Aorta (tissue), 5 donors: ENCODE measurements at regions of chr4 and their contacts with region 1.

Region 1: GRCh38 chr4:76305971-76306881 is at the start of gene STBD1:
- DNase-seq: peak; percentile 91 to 96
- ATAC-seq: peak; percentile 94
- H3K4me3 ChIP-seq: peak within 1 kb of the TSS; percentile 67 to 75
- H3K27ac ChIP-seq: peak within 1 kb of the TSS; percentile 45 to 90
- H3K4me1 ChIP-seq: peaks cover 3 to 5% of the 10 kb centered on the region in 2 donors
- H3K27me3 ChIP-seq: no peaks in the 10 kb centered on the region
- total RNA-seq, gene STBD1: 11.6 to 16.8 TPM

Region 2: DNA sequence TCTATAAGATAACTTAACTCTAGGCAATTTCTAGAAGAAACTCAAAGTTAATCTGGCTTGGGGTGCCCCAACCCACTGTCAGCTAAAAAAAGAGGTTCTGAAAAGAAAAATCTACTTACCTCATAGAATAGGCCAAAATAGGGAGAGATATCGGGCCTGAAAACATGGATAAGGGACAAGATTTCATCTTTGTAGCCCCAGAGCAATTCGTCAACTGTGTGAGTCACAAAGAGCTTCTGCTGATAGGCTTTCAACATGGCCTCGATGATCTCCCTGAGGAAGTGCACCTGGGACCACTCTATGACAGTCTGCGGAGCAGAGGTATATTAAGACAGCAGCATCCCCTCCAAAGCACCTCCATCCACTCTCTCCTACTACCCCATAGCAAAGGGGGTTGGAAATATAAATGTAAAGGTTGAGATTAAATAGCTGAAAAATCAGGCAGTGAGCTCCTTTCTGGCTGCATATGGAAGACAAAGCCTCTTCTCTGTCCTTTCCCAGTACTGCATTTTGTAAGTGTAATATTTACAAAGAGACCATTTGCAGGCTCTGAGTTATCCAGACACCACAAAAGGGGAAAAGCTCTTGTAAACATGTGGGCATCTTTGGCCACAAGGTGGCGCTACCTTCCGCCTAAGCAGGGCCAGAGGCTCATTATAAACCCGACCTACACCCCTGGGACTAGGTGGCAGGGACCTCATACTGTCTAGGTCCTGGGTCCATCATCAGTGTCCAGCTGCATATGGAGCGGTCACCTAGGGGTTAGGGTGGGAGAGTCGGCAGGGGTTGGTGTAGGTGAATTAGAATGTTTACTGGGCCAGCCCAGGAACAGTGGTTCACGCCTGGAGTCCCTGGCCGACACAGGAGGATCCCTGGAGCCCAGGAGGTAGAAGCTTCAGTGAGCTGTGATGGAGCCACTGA is 126.6 kb before region 1 on chr4:
- intact Hi-C with region 1: loop called (anchors 5 to 10 kb)
- DNase-seq: peak; percentile 90 to 95
- ATAC-seq: peak; percentile 89
- H3K4me3 ChIP-seq: no peak overlapping the region
- H3K27ac ChIP-seq: no peak overlapping the region
- H3K4me1 ChIP-seq: no peaks in the 10 kb centered on the region
- H3K27me3 ChIP-seq: no peaks in the 10 kb centered on the region

Region 3: GRCh38 chr4:76213415-76214176 is 92.6 kb before region 1 on chr4 and contains the start of gene SCARB2:
- intact Hi-C with region 1: loop called in 1 of 2 experiments (anchors 2 kb)
- DNase-seq: peak; percentile 93 to 96
- ATAC-seq: peak; percentile 96
- H3K4me3 ChIP-seq: peak within 1 kb of the TSS; percentile 38 to 91
- H3K27ac ChIP-seq: peak within 1 kb of the TSS; percentile 38 to 94
- H3K4me1 ChIP-seq: peaks cover 4 to 5% of the 10 kb centered on the region in 2 donors
- H3K27me3 ChIP-seq: no peaks in the 10 kb centered on the region
- total RNA-seq, gene SCARB2: 138 to 154 TPM

Region 4: DNA sequence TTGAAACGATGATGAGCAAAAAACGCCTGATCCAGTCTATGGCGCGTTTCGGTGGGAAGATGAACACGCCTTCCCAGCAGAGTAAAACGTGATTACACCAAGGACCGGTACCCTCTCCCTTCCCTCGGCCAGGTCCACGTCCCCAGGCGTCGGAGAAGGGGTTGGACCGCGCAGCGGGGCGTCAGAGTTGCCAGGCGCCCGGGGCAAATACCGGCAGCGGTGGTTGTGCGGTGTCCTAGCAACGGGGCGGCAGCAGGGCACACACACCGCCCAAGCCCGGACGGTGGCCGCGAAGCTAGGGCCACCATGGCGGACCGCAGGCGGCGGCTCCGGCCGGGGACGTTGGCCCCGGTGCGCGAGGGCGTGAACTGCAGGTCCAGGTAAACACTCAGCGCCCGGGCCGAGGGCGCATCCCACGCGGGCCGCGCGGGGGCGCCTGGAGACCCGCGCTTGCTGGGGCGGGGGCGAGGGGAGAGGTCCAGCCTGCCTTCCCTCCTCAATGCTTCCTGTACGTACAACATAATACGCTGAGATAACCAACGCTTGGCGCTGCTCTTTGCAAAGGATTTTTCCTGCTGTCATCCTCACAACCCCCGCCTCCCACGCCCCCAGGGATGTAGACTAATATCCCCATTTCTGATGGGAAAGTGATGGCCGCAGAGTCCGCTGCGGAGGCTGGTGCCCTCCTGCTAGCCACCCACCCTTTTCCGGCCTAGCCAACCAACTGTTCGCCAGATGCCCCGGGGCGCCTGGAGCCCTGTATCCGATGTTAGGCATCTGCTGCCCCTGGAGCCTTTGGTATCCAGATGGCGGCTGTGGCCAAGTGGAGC is 54.6 kb before region 1 on chr4 and contains the start of gene FAM47E:
- intact Hi-C with region 1: loop called in 1 of 2 experiments (anchors 5 kb)
- DNase-seq: peak; percentile 89 to 92
- ATAC-seq: peak; percentile 91
- H3K4me3 ChIP-seq: peak within 1 kb of the TSS; percentile 60 to 64
- H3K27ac ChIP-seq: no peak within 1 kb of the TSS
- H3K4me1 ChIP-seq: no peaks in the 10 kb centered on the region
- H3K27me3 ChIP-seq: no peaks in the 10 kb centered on the region
- total RNA-seq, gene FAM47E: 1.8 to 2.4 TPM

Region 5: DNA sequence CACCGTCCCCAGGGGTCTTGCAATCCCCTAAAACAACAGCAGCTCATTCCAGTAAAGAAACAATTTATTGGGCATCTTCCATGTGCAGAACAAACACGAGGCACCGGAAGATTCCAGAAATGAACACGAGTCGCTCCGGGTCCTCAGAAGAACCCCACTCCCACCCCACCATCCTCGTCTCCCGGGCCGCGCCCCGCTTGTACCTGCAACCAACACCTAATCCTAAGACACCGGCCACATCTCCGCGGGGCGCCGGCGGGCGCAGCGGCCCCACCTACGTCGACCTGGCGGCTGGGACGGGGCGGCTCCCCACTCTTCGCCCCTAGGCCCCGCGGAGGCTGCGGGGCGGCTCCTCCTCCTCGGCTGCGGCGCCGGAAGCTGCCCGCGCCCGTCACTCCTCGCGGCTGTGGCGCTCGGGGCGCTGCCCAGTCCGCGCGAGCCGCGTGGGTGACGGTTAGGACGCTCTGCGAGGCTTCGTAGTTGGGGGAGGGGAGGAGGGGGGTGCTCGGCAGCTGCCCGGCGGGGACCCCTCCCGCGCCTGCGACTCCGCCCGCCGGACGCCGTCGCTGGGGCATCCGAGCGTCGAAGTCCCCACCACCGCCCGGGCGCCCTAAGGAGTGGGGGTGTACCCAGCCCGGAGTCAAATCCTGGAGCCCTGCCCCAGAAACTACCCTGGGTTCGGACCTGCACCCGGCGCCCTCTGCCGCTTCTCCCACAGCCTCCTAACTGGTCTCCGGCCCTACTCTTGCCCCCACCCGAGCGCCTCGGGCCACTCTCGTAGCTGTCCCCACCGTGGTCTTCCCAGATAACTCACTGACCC is 114.7 kb after region 1 on chr4 and contains the start of gene CCDC158:
- intact Hi-C with region 1: loop called in 1 of 2 experiments (anchors 2 kb)
- DNase-seq: peak; percentile 50 to 83
- ATAC-seq: peak; percentile 91
- H3K4me3 ChIP-seq: peak within 1 kb of the TSS; percentile 65 to 82
- H3K27ac ChIP-seq: no peak within 1 kb of the TSS
- H3K4me1 ChIP-seq: no peaks in the 10 kb centered on the region
- H3K27me3 ChIP-seq: no peaks in the 10 kb centered on the region
- total RNA-seq, gene CCDC158: 1.6 to 1.9 TPM

Region 6: GRCh38 chr4:76830964-76831703 is 524.9 kb after region 1 on chr4:
- intact Hi-C with region 1: loop called in 1 of 2 experiments (anchors 2 kb)
- DNase-seq: no peak
- ATAC-seq: peak; percentile 84
- H3K4me3 ChIP-seq: no peak overlapping the region
- H3K27ac ChIP-seq: peak overlapping the region; percentile 67 to 68
- H3K4me1 ChIP-seq: peaks cover 0 to 8% of the 10 kb centered on the region in 2 donors
- H3K27me3 ChIP-seq: no peaks in the 10 kb centered on the region